ENCODE measurements at regions of chr2 and their contacts with region 1.

Region 1: DNA sequence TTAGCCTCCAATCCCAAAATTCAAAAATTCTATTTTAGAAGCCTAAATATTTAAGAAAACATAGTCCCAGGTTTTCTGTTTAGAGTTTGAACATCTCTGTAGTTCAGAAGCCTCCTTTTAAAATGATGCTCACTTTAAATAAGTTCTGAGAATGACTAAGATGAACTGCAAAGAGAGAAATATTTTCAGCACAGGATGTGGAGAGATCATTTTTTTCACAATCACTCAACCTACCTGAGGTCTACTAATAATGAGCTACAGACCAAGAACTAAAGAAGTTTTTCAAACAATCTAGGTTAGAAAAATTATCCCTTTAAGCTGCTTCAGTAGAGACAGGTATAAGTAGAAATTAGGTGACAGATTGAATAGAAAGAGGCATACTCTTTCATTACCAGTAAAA is 185.1 kb upstream of the CYP26B1 start:
- DNase-seq: no peak
- ATAC-seq: no peak
- H3K4me3 ChIP-seq: no peak overlapping the region
- H3K27ac ChIP-seq: no peak overlapping the region
- H3K4me1 ChIP-seq: no peaks in the 10 kb centered on the region
- H3K27me3 ChIP-seq: no peaks in the 10 kb centered on the region
- CTCF ChIP-seq: no peak

Region 2: GRCh38 chr2:72316774-72317173 is 15.9 kb before region 1 on chr2:
- CTCF ChIA-PET with region 1: no interaction called
- POLR2A ChIA-PET with region 1: interaction called, 12 read pairs
- in situ Hi-C with region 1: no loop called
- intact Hi-C with region 1: no loop called
- DNase-seq: no peak
- ATAC-seq: no peak
- H3K4me3 ChIP-seq: no peak overlapping the region
- H3K27ac ChIP-seq: no peak overlapping the region
- H3K4me1 ChIP-seq: no peaks in the 10 kb centered on the region
- H3K27me3 ChIP-seq: no peaks in the 10 kb centered on the region
- CTCF ChIP-seq: no peak

Region 3: DNA sequence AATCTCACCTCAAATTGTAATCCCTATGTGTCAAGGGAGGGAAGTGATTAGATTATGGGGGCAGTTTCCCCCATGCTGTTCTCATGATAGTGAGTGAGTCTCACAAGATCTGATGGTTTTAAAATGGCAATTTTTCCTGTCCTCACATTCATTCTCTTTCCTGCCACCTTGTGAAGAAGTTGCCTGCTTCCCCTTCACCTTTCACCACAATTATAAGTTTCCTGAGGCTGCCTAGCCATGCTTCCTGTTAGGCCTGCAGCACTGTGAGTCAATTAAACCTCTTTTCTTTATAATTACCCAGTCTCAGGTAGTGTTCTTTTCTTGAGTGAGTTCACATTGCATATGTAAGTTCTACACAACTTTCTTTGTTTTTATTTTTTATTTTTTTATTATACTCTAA is 221.7 kb after region 1 on chr2:
- CTCF ChIA-PET with region 1: no interaction called
- POLR2A ChIA-PET with region 1: no interaction called
- in situ Hi-C with region 1: no loop called
- intact Hi-C with region 1: no loop called
- DNase-seq: no peak
- ATAC-seq: no peak
- H3K4me3 ChIP-seq: no peak overlapping the region
- H3K27ac ChIP-seq: no peak overlapping the region
- H3K4me1 ChIP-seq: no peaks in the 10 kb centered on the region
- H3K27me3 ChIP-seq: no peaks in the 10 kb centered on the region
- CTCF ChIP-seq: no peak

Measured in Panc1 (cell line).